AG04450 (cell line): ENCODE measurements at regions of chr20 and their contacts with region 1.

Region 1: DNA sequence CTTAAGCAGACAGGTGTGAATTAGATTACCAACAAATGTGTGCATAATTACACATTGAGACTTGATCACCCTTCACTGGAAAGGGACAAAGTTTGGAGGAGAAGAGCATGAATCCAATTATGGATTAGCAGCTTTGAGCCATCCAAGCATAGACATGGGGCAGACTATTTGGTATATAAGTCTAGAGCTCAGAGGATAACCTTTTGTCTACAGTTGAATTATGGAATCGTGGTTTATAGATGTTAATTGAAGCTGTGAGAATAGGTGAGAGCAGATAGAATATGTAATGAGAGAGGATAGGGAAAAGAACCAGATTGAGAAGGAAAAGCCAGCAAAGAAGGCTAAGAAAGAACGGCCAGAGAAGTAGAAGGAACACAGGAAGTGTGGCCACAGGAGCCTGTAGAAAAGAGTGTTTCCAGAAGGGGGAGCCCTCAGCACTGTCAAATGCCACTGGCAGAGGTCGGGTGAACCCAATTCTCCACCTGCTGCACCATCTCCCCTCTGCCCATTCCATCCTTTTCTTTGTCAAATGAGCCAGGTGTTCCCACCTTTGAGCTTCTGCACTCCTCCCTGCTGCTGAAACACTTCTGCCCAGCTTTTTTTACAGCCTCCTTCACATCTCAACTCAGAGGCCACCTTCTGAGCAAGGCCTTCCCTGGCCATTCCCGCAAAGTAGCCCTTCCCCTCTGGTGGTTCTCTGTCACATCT is 7.3 kb downstream of the DNTTIP1 start:
- DNase-seq: no peak
- H3K4me3 ChIP-seq: no peak overlapping the region
- H3K27ac ChIP-seq: no peak overlapping the region
- H3K27me3 ChIP-seq: no peaks in the 10 kb centered on the region
- CTCF ChIP-seq: peak; percentile 79

Region 2: GRCh38 chr20:45812157-45813020 is 13.3 kb after region 1 on chr20 and contains the start of gene UBE2C:
- CTCF ChIA-PET with region 1: interaction called, 19 read pairs
- POLR2A ChIA-PET with region 1: no interaction called
- DNase-seq: peak; percentile 99
- H3K4me3 ChIP-seq: peak within 1 kb of the TSS; percentile 73
- H3K27ac ChIP-seq: peak within 1 kb of the TSS; percentile 57
- H3K27me3 ChIP-seq: no peaks in the 10 kb centered on the region
- CTCF ChIP-seq: no peak
- polyA plus RNA-seq, gene UBE2C: 25.3 and 27.8 TPM in 2 replicates

Region 3: DNA sequence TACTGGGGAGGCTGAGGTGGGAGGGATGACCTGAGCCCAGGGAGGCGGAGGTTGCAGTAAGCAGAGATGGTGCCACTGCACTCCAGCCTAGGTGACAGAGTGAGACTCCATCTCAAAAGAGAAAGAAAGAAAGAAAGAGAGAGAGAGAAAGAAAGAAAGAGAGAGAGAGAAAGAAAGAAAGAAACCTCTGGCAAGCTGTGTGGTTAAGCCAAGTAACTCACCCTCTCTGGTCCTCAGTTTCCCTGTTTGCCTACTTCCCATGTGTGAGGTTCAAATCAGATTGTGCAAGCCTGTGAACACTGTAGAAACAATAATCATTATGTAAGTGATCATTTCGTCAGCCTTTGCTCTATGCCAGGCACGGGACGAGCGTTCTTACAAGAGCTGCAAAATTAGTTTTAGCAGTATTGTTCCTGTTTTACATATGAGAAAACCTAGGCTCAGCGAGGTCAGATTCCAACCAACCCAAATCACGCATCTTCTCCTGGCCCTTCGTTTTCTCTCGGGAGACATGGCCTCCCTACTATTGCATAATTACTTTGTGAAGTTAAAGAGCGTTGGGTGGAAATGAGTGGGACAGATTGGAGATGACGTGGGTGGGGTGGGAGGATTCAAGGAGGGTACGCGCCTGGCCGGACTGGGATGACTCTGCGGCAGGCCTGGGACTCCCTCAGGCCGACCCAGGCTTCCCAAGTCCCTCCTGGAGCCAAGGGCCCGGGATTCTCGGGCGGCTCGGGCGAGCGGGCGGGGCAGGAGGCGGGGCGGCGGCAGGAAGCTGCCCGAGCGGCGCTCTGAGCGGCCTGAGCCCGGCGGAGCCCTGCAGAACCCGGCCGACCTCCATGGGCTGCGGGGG is 34.2 kb after region 1 on chr20 and contains the start of gene SNX21:
- CTCF ChIA-PET with region 1: interaction called, 14 read pairs
- POLR2A ChIA-PET with region 1: no interaction called
- DNase-seq: peak; percentile 83
- H3K4me3 ChIP-seq: peak within 1 kb of the TSS; percentile 83
- H3K27ac ChIP-seq: peak within 1 kb of the TSS; percentile 88
- H3K27me3 ChIP-seq: no peaks in the 10 kb centered on the region
- CTCF ChIP-seq: no peak
- polyA plus RNA-seq, gene SNX21: 9.2 and 11.5 TPM in 2 replicates

Region 4: GRCh38 chr20:45867819-45868176 is 68.7 kb after region 1 on chr20:
- CTCF ChIA-PET with region 1: interaction called, 15 read pairs
- POLR2A ChIA-PET with region 1: no interaction called
- DNase-seq: no peak
- H3K4me3 ChIP-seq: no peak overlapping the region
- H3K27ac ChIP-seq: peak overlapping the region; percentile 65
- H3K27me3 ChIP-seq: no peaks in the 10 kb centered on the region
- CTCF ChIP-seq: no peak